GM12878 (cell line): ENCODE measurements at regions of chr15 and their contacts with region 1.

Region 1: DNA sequence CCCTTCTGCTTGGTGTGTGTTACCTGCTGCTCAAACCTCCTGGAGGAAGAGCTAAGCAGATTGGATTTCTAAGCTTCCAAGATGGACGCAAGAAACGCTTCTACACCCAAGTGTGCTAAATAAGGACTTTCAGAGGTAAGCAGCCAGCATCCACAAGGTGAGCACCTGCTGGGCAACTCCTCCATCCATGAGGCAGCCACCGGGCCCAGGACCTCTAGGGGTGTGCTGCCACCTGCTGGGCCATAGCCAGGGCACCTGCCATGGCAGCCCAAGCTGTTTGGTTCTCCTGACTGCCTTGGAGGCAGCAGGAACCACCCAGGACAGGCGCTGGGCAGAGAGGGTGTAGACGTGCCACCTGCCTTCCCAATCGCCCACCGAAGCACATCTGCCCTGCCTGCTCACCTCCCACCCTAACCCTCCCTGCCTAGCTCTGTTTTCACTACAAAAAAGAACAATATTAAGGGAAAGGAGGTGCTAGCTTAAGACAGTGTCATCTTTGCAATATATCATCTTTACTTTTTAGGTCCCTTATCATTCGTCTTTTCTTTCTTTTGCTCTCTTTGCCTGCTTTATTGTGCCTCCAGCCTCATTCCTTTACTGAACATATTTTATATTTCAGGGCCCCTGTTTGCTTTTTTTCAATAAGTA is 12.9 kb downstream of the C15orf62 start:
- DNase-seq: no peak
- ATAC-seq: peak; percentile 100
- H3K4me3 ChIP-seq: no peak overlapping the region
- H3K27ac ChIP-seq: no peak overlapping the region
- H3K4me1 ChIP-seq: peaks cover 5% of the 10 kb centered on the region
- H3K27me3 ChIP-seq: no peaks in the 10 kb centered on the region
- CTCF ChIP-seq: peak; percentile 89 to 98 (median 97)
- EP300 ChIP-seq: no peak
- POLR2A ChIP-seq: no peak
- RAD21 ChIP-seq: peak; percentile 88

Region 2: DNA sequence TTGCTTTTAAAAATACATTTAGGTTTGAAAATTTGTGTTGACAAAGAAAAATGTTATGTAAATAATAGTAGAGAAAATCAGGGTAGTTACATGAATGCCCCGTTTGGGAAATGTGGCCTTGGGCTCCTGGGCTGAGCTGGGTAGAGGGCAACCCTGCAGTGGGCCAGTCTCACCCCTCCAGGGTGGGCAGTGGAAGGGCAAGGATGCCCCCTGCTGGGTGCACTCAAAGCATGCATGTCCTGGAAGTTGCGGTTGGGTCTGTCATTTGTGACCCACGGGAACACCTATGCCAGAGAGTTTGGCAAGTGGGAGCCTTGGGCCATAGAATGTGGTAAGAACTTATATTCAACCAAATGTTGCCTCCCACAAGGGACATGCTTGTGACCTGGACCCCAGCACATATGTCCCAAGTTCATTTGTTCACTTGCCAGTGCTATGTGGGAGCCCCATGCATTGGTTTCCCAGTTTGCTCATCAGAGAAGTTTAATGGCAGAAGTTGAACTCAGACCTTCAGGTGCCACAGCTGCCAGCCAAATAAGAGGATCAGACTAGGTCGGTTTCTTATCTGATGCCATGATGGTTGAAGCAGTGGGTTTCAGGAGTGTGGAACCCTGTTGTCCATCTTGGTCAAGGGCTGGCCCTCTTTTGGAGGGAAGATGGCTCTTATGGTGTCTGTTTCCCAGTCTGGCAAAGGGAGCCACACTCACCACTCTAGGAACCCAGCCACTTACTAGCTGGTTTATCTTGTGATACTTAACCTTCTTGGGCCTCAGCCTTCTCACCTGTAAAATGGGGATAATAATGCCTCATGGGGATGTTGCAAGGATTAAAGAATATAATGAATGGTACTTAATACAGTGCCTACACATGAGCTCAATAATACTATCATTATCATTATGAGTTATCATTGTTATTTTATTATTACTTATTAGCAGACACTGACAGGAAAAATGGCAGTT is 472.4 kb before region 1 on chr15:
- CTCF ChIA-PET with region 1: no interaction called
- POLR2A ChIA-PET with region 1: no interaction called
- RAD21 ChIA-PET with region 1: no interaction called
- SMC1A ChIA-PET with region 1: no interaction called
- in situ Hi-C with region 1: no loop called
- intact Hi-C with region 1: no loop called
- DNase-seq: peak; percentile 17
- ATAC-seq: peak; percentile 58
- H3K4me3 ChIP-seq: no peak overlapping the region
- H3K27ac ChIP-seq: no peak overlapping the region
- H3K4me1 ChIP-seq: peaks cover 12% of the 10 kb centered on the region
- H3K27me3 ChIP-seq: peaks cover 0 to 3% of the 10 kb centered on the region in 2 experiments; a peak in 2 of 4 replicates
- CTCF ChIP-seq: peak; percentile 68 to 79 (median 70)
- EP300 ChIP-seq: no peak
- POLR2A ChIP-seq: no peak
- RAD21 ChIP-seq: peak; percentile 90

Region 3: GRCh38 chr15:40512440-40512839 is 270.3 kb before region 1 on chr15:
- CTCF ChIA-PET with region 1: no interaction called
- POLR2A ChIA-PET with region 1: no interaction called
- RAD21 ChIA-PET with region 1: interaction called, 7 read pairs
- SMC1A ChIA-PET with region 1: no interaction called
- in situ Hi-C with region 1: loop called (anchors 5 kb)
- intact Hi-C with region 1: no loop called
- DNase-seq: no peak
- ATAC-seq: no peak
- H3K4me3 ChIP-seq: no peak overlapping the region
- H3K27ac ChIP-seq: no peak overlapping the region
- H3K4me1 ChIP-seq: peaks cover 9% of the 10 kb centered on the region
- H3K27me3 ChIP-seq: no peaks in the 10 kb centered on the region
- CTCF ChIP-seq: no peak
- EP300 ChIP-seq: no peak
- POLR2A ChIP-seq: no peak
- RAD21 ChIP-seq: no peak

Region 4: GRCh38 chr15:40684381-40684780 is 98.3 kb before region 1 on chr15:
- CTCF ChIA-PET with region 1: interaction called, 26 read pairs
- POLR2A ChIA-PET with region 1: no interaction called
- RAD21 ChIA-PET with region 1: interaction called, 10 read pairs
- SMC1A ChIA-PET with region 1: interaction called, 10 read pairs
- in situ Hi-C with region 1: no loop called
- intact Hi-C with region 1: loop called (anchors 1 kb)
- DNase-seq: no peak
- ATAC-seq: no peak
- H3K4me3 ChIP-seq: no peak overlapping the region
- H3K27ac ChIP-seq: no peak overlapping the region
- H3K4me1 ChIP-seq: no peaks in the 10 kb centered on the region
- H3K27me3 ChIP-seq: no peaks in the 10 kb centered on the region
- CTCF ChIP-seq: no peak
- EP300 ChIP-seq: no peak
- POLR2A ChIP-seq: no peak
- RAD21 ChIP-seq: no peak

Region 5: DNA sequence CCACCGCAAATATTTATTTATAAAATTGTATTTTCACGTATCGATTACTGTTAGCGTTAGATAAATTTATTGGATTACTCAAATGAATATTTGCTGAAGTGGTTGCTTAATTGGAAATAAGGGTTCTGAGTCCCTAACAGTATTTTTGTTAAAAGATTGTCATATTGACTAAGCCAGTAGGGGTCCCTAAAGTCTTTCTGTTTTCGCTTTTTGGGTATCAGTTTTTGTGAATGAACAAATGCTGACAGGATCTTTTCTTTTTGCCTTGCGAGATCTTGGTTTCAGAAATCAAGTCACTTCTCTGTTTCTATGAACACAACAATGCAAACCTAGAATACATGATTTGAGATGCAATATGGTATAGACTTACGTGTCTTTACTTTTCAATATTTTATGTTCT is 80.6 kb before region 1 on chr15:
- CTCF ChIA-PET with region 1: interaction called, 18 read pairs
- POLR2A ChIA-PET with region 1: interaction called, 4 read pairs
- RAD21 ChIA-PET with region 1: interaction called, 4 read pairs
- SMC1A ChIA-PET with region 1: interaction called, 9 read pairs
- in situ Hi-C with region 1: no loop called
- intact Hi-C with region 1: loop called (anchors 5 kb)
- DNase-seq: no peak
- ATAC-seq: peak; percentile 33; the same call in 1 of the 3 replicates
- H3K4me3 ChIP-seq: no peak overlapping the region
- H3K27ac ChIP-seq: no peak overlapping the region
- H3K4me1 ChIP-seq: 0 out of 2 replicates have a peak, but pooled peaks cover 2% of the 10 kb centered on the region
- H3K27me3 ChIP-seq: no peaks in the 10 kb centered on the region
- CTCF ChIP-seq: peak; percentile 28 to 42 (median 36); a peak in 3 of 6 replicates
- EP300 ChIP-seq: no peak
- POLR2A ChIP-seq: no peak
- RAD21 ChIP-seq: peak; percentile 44; the same call in 1 of the 2 replicates

Region 6: DNA sequence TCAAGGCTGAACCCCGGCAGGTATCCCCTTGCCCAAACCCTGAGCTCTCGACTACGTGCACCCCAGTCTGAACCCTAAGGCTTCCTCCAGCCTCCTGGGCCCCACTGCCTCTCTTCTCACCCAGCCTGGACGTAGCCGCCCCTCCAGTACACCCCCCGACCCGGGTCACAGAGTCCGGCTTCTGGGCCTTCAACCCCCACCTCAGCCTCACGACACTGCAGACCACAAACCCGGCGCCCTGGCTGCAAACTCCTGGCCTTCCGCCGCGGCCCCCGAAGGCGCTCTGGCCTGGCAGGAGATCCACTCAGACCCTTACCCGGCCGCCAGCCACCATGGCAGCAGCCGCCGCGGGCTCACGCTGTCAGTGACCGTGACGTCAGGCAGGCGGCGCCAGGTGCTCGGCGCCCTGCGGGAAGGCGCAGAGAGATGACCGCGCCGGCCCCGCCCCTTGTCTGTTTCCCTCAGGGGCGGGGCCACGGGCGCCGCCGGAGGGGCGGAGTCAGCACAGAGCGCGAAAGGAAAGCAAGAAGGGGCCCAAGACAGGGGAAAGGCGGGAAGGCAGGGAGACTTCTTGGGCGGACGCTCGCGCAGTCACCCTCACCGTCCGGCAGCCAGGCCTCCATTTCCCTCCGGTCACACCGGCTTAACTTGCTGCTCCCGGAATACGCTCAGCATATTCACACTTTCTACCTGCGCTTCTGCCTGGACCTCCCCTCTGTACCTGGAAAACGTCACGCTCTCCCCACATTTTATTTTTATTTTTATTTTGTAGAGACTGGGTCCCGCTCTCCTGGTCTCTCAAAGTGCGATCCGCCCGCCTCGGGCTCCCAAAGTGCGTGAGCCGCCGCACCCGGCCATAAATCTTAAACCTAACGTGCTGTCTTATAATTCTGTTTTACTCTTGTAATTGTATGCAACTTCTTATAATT is 27.6 kb before region 1 on chr15 and contains the start of gene RMDN3:
- CTCF ChIA-PET with region 1: interaction called, 20 read pairs
- POLR2A ChIA-PET with region 1: no interaction called
- RAD21 ChIA-PET with region 1: interaction called, 8 read pairs
- SMC1A ChIA-PET with region 1: interaction called, 4 read pairs
- in situ Hi-C with region 1: no loop called
- intact Hi-C with region 1: no loop called
- DNase-seq: peak; percentile 69
- ATAC-seq: peak; percentile 89
- H3K4me3 ChIP-seq: peak within 1 kb of the TSS; percentile 91
- H3K27ac ChIP-seq: peak within 1 kb of the TSS; percentile 86
- H3K4me1 ChIP-seq: peaks cover 3% of the 10 kb centered on the region
- H3K27me3 ChIP-seq: no peaks in the 10 kb centered on the region
- CTCF ChIP-seq: no peak
- EP300 ChIP-seq: no peak; a peak in 1 of 4 replicates
- POLR2A ChIP-seq: peak; percentile 93
- RAD21 ChIP-seq: no peak
- polyA plus RNA-seq, gene RMDN3: 5.7 to 10.2 TPM

Region 7: GRCh38 chr15:40857601-40858341 is 75.1 kb after region 1 on chr15:
- CTCF ChIA-PET with region 1: interaction called, 45 read pairs
- POLR2A ChIA-PET with region 1: interaction called, 6 read pairs
- RAD21 ChIA-PET with region 1: interaction called, 8 read pairs
- SMC1A ChIA-PET with region 1: interaction called, 17 read pairs
- in situ Hi-C with region 1: no loop called
- intact Hi-C with region 1: no loop called
- DNase-seq: no peak
- ATAC-seq: peak; percentile 89
- H3K4me3 ChIP-seq: no peak overlapping the region
- H3K27ac ChIP-seq: no peak overlapping the region
- H3K4me1 ChIP-seq: peaks cover 4% of the 10 kb centered on the region
- H3K27me3 ChIP-seq: no peaks in the 10 kb centered on the region
- CTCF ChIP-seq: peak; percentile 95 to 99 (median 98)
- EP300 ChIP-seq: no peak
- POLR2A ChIP-seq: no peak
- RAD21 ChIP-seq: peak; percentile 95

Region 8: GRCh38 chr15:40974879-40975278 is 192.2 kb after region 1 on chr15:
- CTCF ChIA-PET with region 1: no interaction called
- POLR2A ChIA-PET with region 1: no interaction called
- RAD21 ChIA-PET with region 1: no interaction called
- SMC1A ChIA-PET with region 1: no interaction called
- in situ Hi-C with region 1: no loop called
- intact Hi-C with region 1: no loop called
- DNase-seq: no peak
- ATAC-seq: no peak
- H3K4me3 ChIP-seq: no peak overlapping the region
- H3K27ac ChIP-seq: no peak overlapping the region
- H3K4me1 ChIP-seq: no peaks in the 10 kb centered on the region
- H3K27me3 ChIP-seq: no peaks in the 10 kb centered on the region
- CTCF ChIP-seq: no peak
- EP300 ChIP-seq: no peak
- POLR2A ChIP-seq: no peak
- RAD21 ChIP-seq: no peak